ENCODE measurements at regions of chr4 and their contacts with region 1.

Region 1: DNA sequence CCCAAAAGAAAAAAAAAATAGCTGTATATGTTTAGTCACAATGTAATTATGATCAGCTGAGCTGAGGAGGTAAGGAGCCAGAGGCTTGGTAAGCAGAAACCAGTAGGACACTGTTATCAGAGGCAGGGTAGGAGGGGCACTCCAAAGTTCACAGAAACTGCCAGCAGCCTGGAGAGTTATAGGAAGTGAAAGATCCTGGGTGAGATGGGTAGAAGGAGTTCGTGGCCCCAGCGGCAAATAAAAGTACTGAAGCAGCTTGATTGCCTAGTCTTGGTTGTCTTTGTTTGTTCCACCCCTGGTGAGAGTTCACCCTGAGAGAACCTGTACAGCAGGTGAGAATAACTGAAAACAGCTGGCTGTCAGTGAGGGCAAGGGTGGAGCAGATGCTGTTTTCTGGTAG is 340.8 kb downstream of the ADGRL3 start:
- DNase-seq: no peak
- ATAC-seq: peak; percentile 71
- H3K4me3 ChIP-seq: no peak overlapping the region
- H3K27ac ChIP-seq: no peak overlapping the region
- H3K4me1 ChIP-seq: no peaks in the 10 kb centered on the region
- H3K27me3 ChIP-seq: no peaks in the 10 kb centered on the region
- CTCF ChIP-seq: no peak
- EP300 ChIP-seq: no peak
- POLR2A ChIP-seq: no peak
- RAD21 ChIP-seq: no peak

Region 2: GRCh38 chr4:60992037-60992436 is 548.9 kb before region 1 on chr4:
- CTCF ChIA-PET with region 1: no interaction called
- POLR2A ChIA-PET with region 1: no interaction called
- RAD21 ChIA-PET with region 1: no interaction called
- SMC1A ChIA-PET with region 1: no interaction called
- in situ Hi-C with region 1: no loop called
- intact Hi-C with region 1: no loop called
- DNase-seq: no peak
- ATAC-seq: no peak
- H3K4me3 ChIP-seq: no peak overlapping the region
- H3K27ac ChIP-seq: no peak overlapping the region
- H3K4me1 ChIP-seq: no peaks in the 10 kb centered on the region
- H3K27me3 ChIP-seq: no peaks in the 10 kb centered on the region
- CTCF ChIP-seq: no peak
- EP300 ChIP-seq: no peak
- POLR2A ChIP-seq: no peak
- RAD21 ChIP-seq: no peak

Region 3: GRCh38 chr4:61553557-61554125 is 12.7 kb after region 1 on chr4:
- CTCF ChIA-PET with region 1: interaction called, 7 read pairs
- POLR2A ChIA-PET with region 1: no interaction called
- RAD21 ChIA-PET with region 1: interaction called, 4 read pairs
- SMC1A ChIA-PET with region 1: interaction called, 12 read pairs
- in situ Hi-C with region 1: no loop called
- intact Hi-C with region 1: no loop called
- DNase-seq: no peak
- ATAC-seq: no peak
- H3K4me3 ChIP-seq: no peak overlapping the region
- H3K27ac ChIP-seq: no peak overlapping the region
- H3K4me1 ChIP-seq: no peaks in the 10 kb centered on the region
- H3K27me3 ChIP-seq: no peaks in the 10 kb centered on the region
- CTCF ChIP-seq: no peak
- EP300 ChIP-seq: no peak
- POLR2A ChIP-seq: no peak
- RAD21 ChIP-seq: no peak

Region 4: GRCh38 chr4:61590881-61591280 is 49.9 kb after region 1 on chr4:
- CTCF ChIA-PET with region 1: interaction called, 4 read pairs
- POLR2A ChIA-PET with region 1: no interaction called
- RAD21 ChIA-PET with region 1: interaction called, 9 read pairs
- SMC1A ChIA-PET with region 1: interaction called, 14 read pairs
- in situ Hi-C with region 1: no loop called
- intact Hi-C with region 1: no loop called
- DNase-seq: no peak
- ATAC-seq: no peak
- H3K4me3 ChIP-seq: no peak overlapping the region
- H3K27ac ChIP-seq: no peak overlapping the region
- H3K4me1 ChIP-seq: no peaks in the 10 kb centered on the region
- H3K27me3 ChIP-seq: no peaks in the 10 kb centered on the region
- CTCF ChIP-seq: no peak; a peak in 1 of 6 replicates
- EP300 ChIP-seq: no peak
- POLR2A ChIP-seq: no peak
- RAD21 ChIP-seq: no peak

Measured in GM12878 (cell line).